ENCODE measurements at regions of chr9 and their contacts with region 1.

Region 1: GRCh38 chr9:72871685-72872084 is 81.2 kb downstream of the ALDH1A1 start:
- DNase-seq: no peak
- ATAC-seq: peak in 2 of 4 donors; percentile 45 to 62
- H3K4me3 ChIP-seq: no peak overlapping the region
- H3K27ac ChIP-seq: no peak overlapping the region
- H3K4me1 ChIP-seq: peaks cover 0 to 3% (median 0%) of the 10 kb centered on the region in 4 donors
- H3K27me3 ChIP-seq: no peaks in the 10 kb centered on the region
- CTCF ChIP-seq: peak; percentile 37 to 66 (median 46)
- POLR2A ChIP-seq: no peak

Region 2: DNA sequence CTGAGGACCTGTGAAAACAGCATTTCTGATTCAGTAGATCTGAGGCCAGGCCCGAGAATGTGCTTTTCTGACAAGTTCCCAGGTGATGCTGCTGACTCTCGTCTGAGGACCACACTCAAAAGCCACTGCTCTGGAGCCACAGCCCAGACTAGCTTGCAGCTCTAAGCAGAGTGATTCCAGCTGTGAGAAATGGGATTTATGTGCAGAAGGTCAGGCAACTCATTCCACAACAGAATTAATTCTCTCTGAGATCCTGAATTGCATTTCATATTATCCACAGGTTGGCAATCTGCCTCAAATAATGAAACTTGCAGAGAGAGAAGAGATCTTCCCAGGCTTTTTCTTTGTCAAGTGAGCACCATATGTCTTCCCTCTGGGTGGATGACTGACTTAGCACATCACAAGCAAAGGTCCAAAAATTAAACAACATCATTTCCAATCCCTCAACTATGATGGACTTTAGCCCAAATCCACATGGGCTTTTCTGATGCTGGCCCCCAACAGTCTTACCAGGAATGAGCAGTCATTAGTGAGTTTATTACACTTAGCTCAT is 59.0 kb before region 1 on chr9:
- intact Hi-C with region 1: no loop called
- DNase-seq: no peak
- ATAC-seq: no peak
- H3K4me3 ChIP-seq: no peak overlapping the region
- H3K27ac ChIP-seq: no peak overlapping the region
- H3K4me1 ChIP-seq: no peaks in the 10 kb centered on the region
- H3K27me3 ChIP-seq: no peaks in the 10 kb centered on the region
- CTCF ChIP-seq: no peak
- POLR2A ChIP-seq: no peak

Region 3: GRCh38 chr9:72925126-72925789 is 53.6 kb after region 1 on chr9:
- intact Hi-C with region 1: loop called in 1 of 2 experiments (anchors 10 kb)
- DNase-seq: no peak
- ATAC-seq: peak; percentile 52 to 82 (median 75)
- H3K4me3 ChIP-seq: no peak overlapping the region
- H3K27ac ChIP-seq: peak overlapping the region; percentile 7 to 64 (median 36)
- H3K4me1 ChIP-seq: peaks cover 0 to 41% (median 10%) of the 10 kb centered on the region in 4 donors
- H3K27me3 ChIP-seq: no peaks in the 10 kb centered on the region
- CTCF ChIP-seq: peak in 1 of 4 donors; percentile 5
- POLR2A ChIP-seq: peak; percentile 51

Region 4: DNA sequence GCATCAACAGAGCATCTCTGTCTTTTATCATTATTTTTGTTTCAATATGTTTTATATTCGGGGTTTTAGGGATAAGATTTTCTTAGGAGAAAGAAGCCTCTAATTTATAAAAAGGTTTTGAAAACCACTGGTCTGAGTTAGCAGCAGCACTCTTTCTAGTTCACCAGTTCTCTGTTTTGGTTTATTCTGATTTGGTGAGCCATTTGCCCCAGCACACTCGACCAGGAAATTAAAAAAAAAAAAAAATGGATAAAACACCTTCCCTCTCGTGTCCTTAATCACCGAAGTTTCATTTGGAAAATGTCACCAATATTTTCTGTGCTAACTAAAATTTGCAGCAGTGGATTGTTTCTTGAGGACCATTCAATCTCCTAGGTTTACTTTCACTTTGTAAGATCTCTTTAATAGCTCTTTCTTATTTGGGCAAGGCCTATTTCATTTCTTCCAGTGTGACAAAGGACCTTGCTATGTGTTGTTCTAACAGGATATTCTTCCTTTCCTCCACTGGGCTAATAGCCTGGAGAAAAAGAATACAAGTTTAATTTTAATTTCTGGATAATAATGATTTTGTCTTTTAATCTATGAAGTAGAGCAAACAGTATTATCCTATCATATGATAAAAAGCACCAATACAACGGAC is 222.2 kb after region 1 on chr9:
- intact Hi-C with region 1: no loop called
- DNase-seq: no peak
- ATAC-seq: peak in 3 of 4 donors; percentile 37 to 54 (median 48)
- H3K4me3 ChIP-seq: no peak overlapping the region
- H3K27ac ChIP-seq: no peak overlapping the region
- H3K4me1 ChIP-seq: peaks cover 0 to 12% (median 0%) of the 10 kb centered on the region in 4 donors
- H3K27me3 ChIP-seq: no peaks in the 10 kb centered on the region
- CTCF ChIP-seq: no peak
- POLR2A ChIP-seq: no peak

Measured in right lobe of liver (tissue), 6 donors.